MCF 10A (cell line): ENCODE measurements at regions of chr1 and their contacts with region 1.

Region 1: DNA sequence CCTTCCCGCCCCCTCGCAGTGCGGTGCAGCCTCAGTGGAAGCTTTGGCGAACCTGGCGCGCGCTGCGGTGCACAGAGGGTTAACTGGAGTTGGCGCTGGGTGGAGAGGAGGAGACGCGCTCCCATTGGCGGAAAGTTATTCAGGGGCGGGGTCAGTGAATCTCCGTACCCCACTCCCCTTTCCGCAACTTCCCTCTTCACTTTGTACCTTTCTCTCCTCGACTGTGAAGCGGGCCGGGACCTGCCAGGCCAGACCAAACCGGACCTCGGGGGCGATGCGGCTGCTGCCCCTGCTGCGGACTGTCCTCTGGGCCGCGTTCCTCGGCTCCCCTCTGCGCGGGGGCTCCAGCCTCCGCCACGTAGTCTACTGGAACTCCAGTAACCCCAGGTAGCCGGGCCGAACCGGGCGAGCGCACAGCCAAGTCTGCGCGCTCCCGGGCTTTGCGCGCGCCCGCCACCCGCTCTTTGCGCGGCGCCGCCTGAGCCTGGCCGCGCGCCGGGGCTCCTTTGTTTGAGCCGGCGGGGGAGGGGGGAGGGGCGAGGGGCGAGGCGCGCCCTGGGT is at the start of gene EFNA4:
- DNase-seq: peak; percentile 96
- H3K4me3 Mint-ChIP-seq: peak within 1 kb of the TSS; percentile 81
- H3K27ac Mint-ChIP-seq: peak within 1 kb of the TSS; percentile 3
- H3K4me1 Mint-ChIP-seq: peaks cover 31% of the 10 kb centered on the region
- H3K27me3 Mint-ChIP-seq: no peaks in the 10 kb centered on the region
- CTCF ChIP-seq: no peak
- total RNA-seq, gene EFNA4: 7.4 and 9.5 TPM in 2 replicates

Region 2: DNA sequence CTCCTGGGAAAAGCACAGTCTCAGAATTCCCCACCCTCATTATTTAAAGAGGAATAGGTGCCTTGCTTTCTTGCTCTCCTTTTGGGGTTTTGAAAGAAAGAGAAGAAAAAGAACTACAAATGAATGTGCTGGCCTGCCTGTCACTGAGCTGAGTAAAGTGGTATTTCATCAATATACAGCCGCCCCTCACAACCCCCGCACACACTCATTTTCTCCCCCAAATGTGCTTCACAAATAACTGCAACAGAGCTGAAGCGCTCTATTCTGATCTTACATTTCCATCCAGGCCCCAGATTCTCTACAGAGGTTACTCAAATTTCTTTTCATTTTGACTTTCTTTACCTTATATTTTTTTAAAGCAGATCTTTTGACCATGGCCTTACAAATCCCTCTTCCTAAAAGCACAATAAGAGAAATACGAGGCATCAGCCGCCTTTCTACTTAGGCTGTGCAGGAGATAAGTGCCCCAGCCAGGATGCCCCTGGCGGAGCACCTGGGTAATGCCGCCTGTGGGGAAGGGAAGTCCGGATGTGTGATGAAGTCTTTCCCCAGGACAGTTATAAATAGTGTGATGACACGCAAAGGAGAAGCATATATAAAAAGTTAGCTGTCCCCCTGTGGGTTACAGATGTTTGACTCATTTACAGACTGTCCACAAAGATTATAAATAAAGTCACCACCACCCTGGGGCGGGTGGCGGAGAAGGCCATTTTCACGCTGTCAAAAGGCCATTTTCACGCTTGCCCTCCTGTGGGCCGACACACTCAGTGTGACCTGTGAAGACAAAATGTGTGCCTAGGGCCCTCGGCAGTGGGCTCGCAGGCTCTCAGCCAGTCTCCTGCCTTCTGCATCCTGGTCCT is 200.1 kb before region 1 on chr1:
- CTCF ChIA-PET with region 1: no interaction called
- POLR2A ChIA-PET with region 1: no interaction called
- intact Hi-C with region 1: no loop called
- DNase-seq: peak; percentile 75
- H3K4me3 Mint-ChIP-seq: no peak overlapping the region
- H3K27ac Mint-ChIP-seq: no peak overlapping the region
- H3K4me1 Mint-ChIP-seq: peaks cover 17% of the 10 kb centered on the region
- H3K27me3 Mint-ChIP-seq: peaks cover 51% of the 10 kb centered on the region
- CTCF ChIP-seq: peak; percentile 73

Region 3: DNA sequence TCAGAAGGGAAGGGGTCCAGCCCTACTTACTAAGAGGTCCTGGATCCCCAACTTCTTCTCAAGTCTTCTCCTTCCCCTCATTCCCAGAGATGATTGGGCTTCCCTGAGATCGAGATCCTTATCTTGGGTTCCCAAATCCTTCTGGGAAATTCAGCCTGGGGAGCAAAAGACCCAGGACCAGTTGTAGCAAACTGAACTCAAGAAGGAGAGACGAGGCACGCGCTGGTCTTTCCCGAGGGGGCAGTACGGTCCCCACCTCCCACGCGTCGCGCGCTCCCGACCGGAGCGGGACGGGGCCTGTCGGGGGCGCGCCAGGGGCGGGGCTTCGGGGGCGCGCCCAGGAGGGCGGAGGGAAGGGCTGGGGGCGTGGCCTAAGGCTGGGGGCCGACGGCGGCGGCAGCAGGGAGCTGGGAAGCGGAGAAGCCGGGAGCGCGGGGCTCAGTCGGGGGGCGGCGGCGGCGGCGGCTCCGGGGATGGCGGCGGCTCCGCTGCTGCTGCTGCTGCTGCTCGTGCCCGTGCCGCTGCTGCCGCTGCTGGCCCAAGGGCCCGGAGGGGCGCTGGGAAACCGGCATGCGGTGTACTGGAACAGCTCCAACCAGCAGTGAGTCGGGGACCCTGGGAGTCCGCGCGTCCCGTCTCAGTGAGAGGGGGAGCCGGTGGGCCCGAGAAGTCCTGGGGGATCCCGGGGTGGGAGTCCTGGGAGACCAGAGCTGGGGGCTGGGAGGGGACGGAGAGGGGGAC is 15.0 kb after region 1 on chr1 and contains the start of gene EFNA3:
- CTCF ChIA-PET with region 1: interaction called, 37 read pairs
- POLR2A ChIA-PET with region 1: interaction called, 41 read pairs
- intact Hi-C with region 1: no loop called
- DNase-seq: peak; percentile 75
- H3K4me3 Mint-ChIP-seq: peak within 1 kb of the TSS; percentile 77
- H3K27ac Mint-ChIP-seq: peak within 1 kb of the TSS; percentile 57
- H3K4me1 Mint-ChIP-seq: peaks cover 37% of the 10 kb centered on the region
- H3K27me3 Mint-ChIP-seq: peaks cover 30% of the 10 kb centered on the region
- CTCF ChIP-seq: no peak
- total RNA-seq, gene EFNA3: 1.6 and 1.7 TPM in 2 replicates